ENCODE measurements at regions of chr3 and their contacts with region 1.

Region 1: GRCh38 chr3:69306239-69307185 is 79.4 kb downstream of the FRMD4B start:
- DNase-seq: peak; percentile 55 to 82
- ATAC-seq: peak; percentile 89 to 97 (median 94)
- H3K4me3 ChIP-seq: no peak overlapping the region
- H3K27ac ChIP-seq: peak overlapping the region in 9 of 10 donors; percentile 32 to 78 (median 63)
- H3K4me1 ChIP-seq: peaks cover 0 to 22% (median 4%) of the 10 kb centered on the region in 9 donors
- H3K27me3 ChIP-seq: no peaks in the 10 kb centered on the region
- CTCF ChIP-seq: peak; percentile 88 to 97 (median 95)

Region 2: DNA sequence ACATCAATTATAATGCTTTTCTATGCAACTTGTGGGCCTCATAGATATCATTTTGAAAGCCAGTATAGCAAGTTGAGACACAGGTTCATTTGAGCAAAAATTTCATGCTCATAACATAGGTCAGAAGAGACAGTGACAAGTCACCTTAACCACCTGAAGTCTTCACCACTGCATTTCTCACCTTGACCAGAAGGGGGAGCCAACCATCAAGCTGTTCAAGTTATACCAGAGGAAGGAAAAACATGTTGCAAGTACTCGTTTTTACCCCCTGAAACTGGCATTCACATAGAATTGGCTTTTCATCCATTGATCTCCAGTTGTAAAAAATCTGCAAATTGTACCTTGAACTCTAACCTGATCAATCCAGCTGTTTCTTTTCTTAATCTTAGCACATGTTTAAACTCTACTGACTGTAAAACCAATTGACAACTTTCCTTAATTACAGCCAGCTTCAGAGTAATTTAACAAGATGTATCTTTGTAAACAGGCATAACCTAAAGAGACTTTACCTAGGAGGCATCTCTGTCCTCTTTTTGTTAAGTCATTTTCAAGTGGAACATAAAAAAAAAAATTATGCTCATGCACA is 185.5 kb before region 1 on chr3:
- intact Hi-C with region 1: loop called in 1 of 10 experiments (anchors 1 kb)
- DNase-seq: peak in 1 of 2 donors; percentile 77
- ATAC-seq: peak in 6 of 8 donors; percentile 38 to 61 (median 44)
- H3K4me3 ChIP-seq: peak overlapping the region in 9 of 10 donors; percentile 28 to 58 (median 49)
- H3K27ac ChIP-seq: peak overlapping the region in 9 of 10 donors; percentile 62 to 88 (median 74)
- H3K4me1 ChIP-seq: peaks cover 0 to 10% (median 6%) of the 10 kb centered on the region in 9 donors
- H3K27me3 ChIP-seq: no peaks in the 10 kb centered on the region
- CTCF ChIP-seq: peak; percentile 78 to 98 (median 93)

Region 3: GRCh38 chr3:69161587-69162307 is 144.8 kb before region 1 on chr3:
- intact Hi-C with region 1: loop called in 9 of 10 experiments (anchors 1 to 5 kb)
- DNase-seq: peak in 1 of 2 donors; percentile 25
- ATAC-seq: peak in 7 of 8 donors; percentile 25 to 65 (median 56)
- H3K4me3 ChIP-seq: no peak overlapping the region
- H3K27ac ChIP-seq: no peak overlapping the region
- H3K4me1 ChIP-seq: peaks cover 0 to 8% (median 0%) of the 10 kb centered on the region in 9 donors
- H3K27me3 ChIP-seq: no peaks in the 10 kb centered on the region
- CTCF ChIP-seq: peak; percentile 83 to 100 (median 95)

Region 4: GRCh38 chr3:69178838-69179739 is 127.4 kb before region 1 on chr3:
- intact Hi-C with region 1: loop called in 1 of 10 experiments (anchors 5 kb)
- DNase-seq: no peak
- ATAC-seq: peak in 1 of 8 donors; percentile 6
- H3K4me3 ChIP-seq: no peak overlapping the region
- H3K27ac ChIP-seq: peak overlapping the region in 2 of 10 donors; percentile 20
- H3K4me1 ChIP-seq: peaks cover 8 to 66% (median 43%) of the 10 kb centered on the region in 9 donors
- H3K27me3 ChIP-seq: no peaks in the 10 kb centered on the region
- CTCF ChIP-seq: no peak

Region 5: DNA sequence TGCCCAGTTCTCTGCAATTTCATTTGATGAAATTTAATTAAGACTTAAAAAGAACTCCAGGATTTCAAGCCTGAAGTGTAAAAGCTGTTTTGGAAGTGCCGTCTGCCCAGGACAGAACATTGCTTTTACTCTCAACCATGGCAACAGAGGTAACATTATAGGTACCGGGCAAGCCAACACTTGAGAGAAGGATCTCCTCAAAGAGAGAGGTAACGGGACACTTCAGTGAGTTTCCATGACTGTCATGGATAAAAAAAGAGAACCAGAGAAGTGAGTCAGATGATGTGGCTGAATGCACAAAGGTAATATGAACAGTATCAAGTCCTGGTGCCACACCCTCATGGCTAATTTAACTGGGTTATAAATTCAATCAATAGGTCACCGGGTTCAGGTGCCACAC is 53.9 kb before region 1 on chr3:
- intact Hi-C with region 1: no loop called
- DNase-seq: no peak
- ATAC-seq: no peak
- H3K4me3 ChIP-seq: no peak overlapping the region
- H3K27ac ChIP-seq: no peak overlapping the region
- H3K4me1 ChIP-seq: peaks cover 0 to 6% (median 0%) of the 10 kb centered on the region in 9 donors
- H3K27me3 ChIP-seq: no peaks in the 10 kb centered on the region
- CTCF ChIP-seq: no peak

Region 6: DNA sequence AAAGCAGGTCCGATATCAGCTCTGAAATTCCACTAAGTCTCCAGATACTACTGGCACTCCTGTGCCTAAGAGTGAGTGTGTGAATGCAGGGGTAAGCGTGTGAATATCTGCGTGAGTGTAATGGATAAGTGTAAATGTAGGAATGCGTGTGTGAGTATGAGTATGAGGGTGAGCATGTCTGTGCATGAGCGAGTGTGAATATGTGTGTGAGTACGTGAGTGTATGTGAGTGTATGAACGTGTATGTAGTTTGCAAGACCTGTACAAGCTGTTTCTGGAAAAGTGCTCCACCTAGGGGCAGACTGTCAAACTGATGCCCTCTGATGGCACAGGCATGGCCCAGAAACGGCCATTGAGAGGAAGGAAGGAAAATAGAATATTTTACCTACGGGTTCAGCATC is 103.7 kb after region 1 on chr3:
- intact Hi-C with region 1: loop called in 2 of 10 experiments (anchors 5 kb)
- DNase-seq: peak in 1 of 2 donors; percentile 85
- ATAC-seq: peak; percentile 78 to 92 (median 86)
- H3K4me3 ChIP-seq: peak overlapping the region in 4 of 10 donors; percentile 14 to 37 (median 26)
- H3K27ac ChIP-seq: peak overlapping the region in 4 of 10 donors; percentile 53 to 78 (median 62)
- H3K4me1 ChIP-seq: peaks cover 0 to 46% (median 28%) of the 10 kb centered on the region in 9 donors
- H3K27me3 ChIP-seq: no peaks in the 10 kb centered on the region
- CTCF ChIP-seq: peak; percentile 66 to 89 (median 81)

Region 7: DNA sequence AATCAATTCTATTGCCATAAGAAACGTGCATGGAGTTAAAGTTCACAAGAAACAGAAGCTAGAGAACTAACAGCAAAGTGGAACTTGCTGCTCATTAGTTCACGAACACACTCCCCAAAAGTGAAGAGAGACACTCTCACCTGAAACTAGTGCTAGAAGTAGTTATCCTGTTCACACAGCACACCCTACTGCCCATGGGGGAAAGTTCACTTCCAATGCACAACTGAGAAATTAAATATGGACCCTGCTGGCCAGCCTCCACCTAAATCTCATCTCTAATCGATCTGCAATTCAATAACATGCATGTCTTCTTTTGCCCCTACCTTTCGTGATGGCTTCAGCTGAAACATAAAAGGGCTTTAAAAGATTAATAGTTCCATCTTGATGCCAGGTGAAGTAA is 118.7 kb after region 1 on chr3:
- intact Hi-C with region 1: loop called in 2 of 10 experiments (anchors 5 kb)
- DNase-seq: peak in 1 of 2 donors; percentile 36
- ATAC-seq: peak in 5 of 8 donors; percentile 38 to 66 (median 60)
- H3K4me3 ChIP-seq: no peak overlapping the region
- H3K27ac ChIP-seq: no peak overlapping the region
- H3K4me1 ChIP-seq: peaks cover 0 to 22% (median 13%) of the 10 kb centered on the region in 9 donors
- H3K27me3 ChIP-seq: no peaks in the 10 kb centered on the region
- CTCF ChIP-seq: peak; percentile 21 to 67 (median 59)

Measured in heart right ventricle (tissue), 16 donors.